Activated CD4-positive, alpha-beta memory T cell treated with anti-CD3 and anti-CD28 coated beads, Interleukin-2, amount 10 ng/mL, durations not matched to agents 7 days and 5 days (primary cell): ENCODE measurements at regions of chr1 and their contacts with region 1.

Region 1: DNA sequence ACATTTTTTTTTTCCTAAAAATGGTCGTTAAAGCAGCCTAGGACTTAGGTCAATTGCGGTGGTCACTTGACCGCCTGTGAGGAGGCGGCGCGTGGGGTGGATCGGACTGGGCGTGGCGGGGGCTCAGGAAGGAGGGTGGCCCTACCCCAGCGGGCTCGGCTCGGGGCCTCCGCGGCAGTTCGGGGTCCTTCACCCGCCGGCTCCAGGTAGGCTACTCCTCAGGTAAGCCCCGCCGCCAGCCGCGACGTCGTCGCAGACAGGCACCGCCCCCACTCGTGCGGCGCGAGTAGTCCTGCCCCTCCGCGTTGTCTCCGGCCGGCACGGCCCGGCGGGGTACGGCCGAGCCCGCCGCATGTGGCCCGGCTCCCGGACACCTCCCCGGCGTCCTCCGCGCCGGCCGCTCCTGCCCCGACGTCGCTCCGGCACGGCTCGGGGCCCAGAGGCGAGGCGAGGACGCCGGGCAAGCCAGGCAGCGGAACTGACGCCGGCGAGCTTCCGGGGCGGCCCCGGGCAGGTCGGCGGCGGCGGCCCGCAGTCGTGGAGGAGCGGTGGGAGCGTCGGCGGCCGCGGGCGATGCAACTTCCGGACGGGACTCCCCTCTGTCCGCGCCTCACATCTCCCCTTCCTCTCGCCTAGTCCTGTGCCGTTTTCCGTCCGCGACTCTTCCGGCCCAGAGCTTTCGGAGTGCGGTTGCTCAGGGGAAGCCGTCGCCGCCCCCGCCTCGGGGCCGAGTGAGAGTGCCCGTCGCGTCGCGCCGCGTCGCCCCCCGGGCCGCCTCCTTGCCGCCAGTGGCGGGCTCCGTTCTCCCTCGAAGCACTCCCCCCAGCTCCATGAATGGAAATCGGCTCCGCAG is at the start of gene AGO3:
- DNase-seq: peak; percentile 88
- H3K4me3 Mint-ChIP-seq: peak within 1 kb of the TSS; percentile 94
- H3K27ac Mint-ChIP-seq: peak within 1 kb of the TSS; percentile 93
- H3K4me1 Mint-ChIP-seq: peaks cover 30% of the 10 kb centered on the region
- H3K27me3 Mint-ChIP-seq: no peaks in the 10 kb centered on the region
- total RNA-seq, gene AGO3: 22.2 to 22.8 TPM

Region 2: GRCh38 chr1:35882945-35883634 is 47.7 kb before region 1 on chr1 and contains the start of gene AGO1:
- CTCF ChIA-PET with region 1: interaction called, 21 read pairs
- POLR2A ChIA-PET with region 1: interaction called, 14 read pairs
- DNase-seq: peak; percentile 97
- H3K4me3 Mint-ChIP-seq: peak within 1 kb of the TSS; percentile 94
- H3K27ac Mint-ChIP-seq: peak within 1 kb of the TSS; percentile 54
- H3K4me1 Mint-ChIP-seq: peaks cover 55% of the 10 kb centered on the region
- H3K27me3 Mint-ChIP-seq: peaks cover 9% of the 10 kb centered on the region
- total RNA-seq, gene AGO1: 20.8 to 21.0 TPM

Region 3: DNA sequence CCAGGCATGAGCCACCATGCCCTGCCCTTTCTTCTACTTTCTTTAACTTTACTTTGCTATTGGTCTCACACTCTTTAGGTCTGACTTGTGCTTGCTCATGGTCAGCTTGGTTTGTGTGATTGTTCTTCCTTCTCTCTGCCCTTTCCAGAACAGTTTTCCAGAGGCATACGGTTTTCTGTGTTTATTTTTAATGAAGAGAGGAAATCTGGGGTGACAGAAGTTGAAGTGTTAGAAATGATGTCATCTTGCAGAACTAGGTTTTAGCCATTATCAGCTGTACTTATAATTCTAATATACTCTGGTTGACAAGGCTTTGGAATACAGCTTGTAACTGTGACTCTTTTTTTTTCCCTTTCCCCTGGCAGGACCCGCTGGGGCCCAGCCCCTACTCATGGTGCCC is 14.5 kb after region 1 on chr1:
- CTCF ChIA-PET with region 1: interaction called, 3 read pairs
- POLR2A ChIA-PET with region 1: interaction called, 58 read pairs
- DNase-seq: no peak
- H3K4me3 Mint-ChIP-seq: no peak overlapping the region
- H3K27ac Mint-ChIP-seq: no peak overlapping the region
- H3K4me1 Mint-ChIP-seq: peaks cover 45% of the 10 kb centered on the region
- H3K27me3 Mint-ChIP-seq: no peaks in the 10 kb centered on the region

Region 4: GRCh38 chr1:36055706-36056105 is 124.9 kb after region 1 on chr1:
- CTCF ChIA-PET with region 1: no interaction called
- POLR2A ChIA-PET with region 1: no interaction called
- DNase-seq: no peak
- H3K4me3 Mint-ChIP-seq: no peak overlapping the region
- H3K27ac Mint-ChIP-seq: no peak overlapping the region
- H3K4me1 Mint-ChIP-seq: no peaks in the 10 kb centered on the region
- H3K27me3 Mint-ChIP-seq: no peaks in the 10 kb centered on the region

Region 5: GRCh38 chr1:36088575-36089443 is 158.0 kb after region 1 on chr1 and contains the start of gene ADPRS:
- CTCF ChIA-PET with region 1: interaction called, 4 read pairs
- POLR2A ChIA-PET with region 1: interaction called, 12 read pairs
- DNase-seq: peak; percentile 92
- H3K4me3 Mint-ChIP-seq: peak within 1 kb of the TSS; percentile 94
- H3K27ac Mint-ChIP-seq: peak within 1 kb of the TSS; percentile 85
- H3K4me1 Mint-ChIP-seq: peaks cover 22% of the 10 kb centered on the region
- H3K27me3 Mint-ChIP-seq: peaks cover 6% of the 10 kb centered on the region
- total RNA-seq, gene ADPRS: 29.7 to 29.9 TPM